ENCODE measurements at regions of chr22 and their contacts with region 1.

Region 1: DNA sequence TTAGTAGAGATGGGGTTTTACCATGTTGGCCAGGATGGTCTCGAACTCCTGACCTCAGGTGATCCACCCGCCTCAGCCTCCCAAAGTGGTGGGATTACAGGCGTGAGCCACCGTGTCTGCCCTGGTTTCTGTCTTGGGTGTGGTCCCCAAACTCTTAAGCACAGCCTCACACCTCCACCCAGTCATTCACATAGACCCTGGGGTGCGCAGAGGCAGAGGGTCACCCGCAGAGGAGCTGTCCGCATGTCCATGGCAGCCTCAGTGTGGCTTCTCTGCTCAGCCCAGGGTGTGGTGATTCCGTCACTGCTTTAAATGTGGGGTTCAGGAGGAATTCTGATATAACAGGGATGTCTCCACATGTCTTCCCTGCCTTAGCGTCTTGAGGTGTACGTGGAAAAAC is 48.5 kb upstream of the PRODH start:
- DNase-seq: no peak
- H3K4me3 ChIP-seq: no peak overlapping the region
- H3K27ac ChIP-seq: no peak overlapping the region
- H3K4me1 ChIP-seq: no peaks in the 10 kb centered on the region
- H3K27me3 ChIP-seq: no peaks in the 10 kb centered on the region; the same call in 1 of the 2 replicates
- CTCF ChIP-seq: no peak

Region 2: DNA sequence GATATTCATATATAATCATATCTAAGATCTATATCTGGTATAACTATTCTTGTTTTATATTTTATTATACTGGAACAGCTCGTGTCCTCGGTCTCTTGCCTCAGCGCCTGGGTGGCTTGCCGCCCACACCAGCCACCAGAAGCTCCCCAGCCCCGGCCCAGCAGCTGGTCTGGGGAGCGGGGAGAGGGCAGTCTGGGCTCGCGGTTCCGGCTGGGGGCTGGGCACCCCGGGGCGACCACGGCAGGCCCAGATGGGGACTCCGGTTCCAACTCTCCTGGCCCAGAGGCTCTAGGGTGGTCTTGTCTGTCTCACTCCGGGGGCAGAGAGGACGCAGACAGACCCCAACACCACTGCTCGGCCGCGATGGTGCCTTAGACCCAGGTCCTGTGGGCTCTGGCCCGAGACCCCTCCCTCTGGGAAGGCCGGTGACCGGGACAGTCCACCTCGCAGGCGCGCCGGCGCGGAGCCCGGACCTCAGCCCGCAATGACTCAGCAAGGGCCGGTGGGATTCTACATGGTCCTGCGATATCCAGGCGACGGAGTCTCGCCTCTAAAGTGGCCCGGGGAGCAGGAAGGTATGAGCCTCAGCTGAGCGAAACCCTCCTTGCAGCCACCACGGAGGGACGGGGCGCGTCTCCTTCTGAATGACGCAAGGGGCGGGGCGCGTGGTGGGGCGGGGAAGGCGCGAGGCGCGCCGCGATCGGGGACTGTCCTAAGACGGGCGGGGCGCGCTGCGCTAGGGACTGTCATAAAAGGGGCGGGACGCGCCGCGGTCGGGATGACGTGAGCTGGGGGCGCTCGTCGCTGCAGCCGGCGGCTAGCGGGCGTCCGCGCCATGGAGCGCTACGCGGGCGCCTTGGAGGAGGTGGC is 78.8 kb before region 1 on chr22 and contains the start of gene DGCR6:
- CTCF ChIA-PET with region 1: interaction called, 17 read pairs
- POLR2A ChIA-PET with region 1: no interaction called
- intact Hi-C with region 1: no loop called
- DNase-seq: no peak
- H3K4me3 ChIP-seq: no peak within 1 kb of the TSS
- H3K27ac ChIP-seq: no peak within 1 kb of the TSS
- H3K4me1 ChIP-seq: no peaks in the 10 kb centered on the region
- H3K27me3 ChIP-seq: no peaks in the 10 kb centered on the region
- CTCF ChIP-seq: no peak
- total RNA-seq, gene DGCR6: 0.63 and 1.4 TPM in 2 replicates

Region 3: GRCh38 chr22:19097518-19097917 is 113.0 kb after region 1 on chr22:
- CTCF ChIA-PET with region 1: no interaction called
- POLR2A ChIA-PET with region 1: no interaction called
- intact Hi-C with region 1: no loop called
- DNase-seq: no peak
- H3K4me3 ChIP-seq: no peak overlapping the region
- H3K27ac ChIP-seq: no peak overlapping the region
- H3K4me1 ChIP-seq: no peaks in the 10 kb centered on the region
- H3K27me3 ChIP-seq: no peaks in the 10 kb centered on the region
- CTCF ChIP-seq: no peak